ENCODE measurements at regions of chr3 and their contacts with region 1.

Region 1: DNA sequence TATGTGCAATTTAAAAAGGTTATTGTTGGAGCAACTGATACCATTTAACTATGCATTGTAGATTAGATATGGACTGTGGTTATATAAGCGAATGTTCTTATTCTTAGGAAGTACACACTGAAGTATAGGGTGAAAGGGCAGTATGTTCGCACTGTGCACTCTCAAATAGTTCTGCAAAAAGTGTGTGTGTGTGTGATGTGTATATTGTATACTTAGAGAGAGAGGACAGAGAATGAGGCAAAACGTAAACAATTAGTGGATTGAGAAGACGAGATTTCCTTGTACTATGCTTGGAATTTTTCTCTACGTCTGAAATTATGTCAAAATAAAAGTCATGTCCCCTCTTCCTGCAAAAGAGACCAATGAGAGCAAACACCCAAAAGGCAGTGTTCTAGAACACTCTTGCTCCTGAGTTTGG is 30.4 kb downstream of the LSM3 start:
- DNase-seq: no peak
- H3K4me3 ChIP-seq: no peak overlapping the region
- H3K27ac ChIP-seq: no peak overlapping the region
- H3K4me1 ChIP-seq: peaks cover 21% of the 10 kb centered on the region
- H3K27me3 ChIP-seq: no peaks in the 10 kb centered on the region
- CTCF ChIP-seq: no peak
- EP300 ChIP-seq: no peak
- POLR2A ChIP-seq: no peak

Region 2: DNA sequence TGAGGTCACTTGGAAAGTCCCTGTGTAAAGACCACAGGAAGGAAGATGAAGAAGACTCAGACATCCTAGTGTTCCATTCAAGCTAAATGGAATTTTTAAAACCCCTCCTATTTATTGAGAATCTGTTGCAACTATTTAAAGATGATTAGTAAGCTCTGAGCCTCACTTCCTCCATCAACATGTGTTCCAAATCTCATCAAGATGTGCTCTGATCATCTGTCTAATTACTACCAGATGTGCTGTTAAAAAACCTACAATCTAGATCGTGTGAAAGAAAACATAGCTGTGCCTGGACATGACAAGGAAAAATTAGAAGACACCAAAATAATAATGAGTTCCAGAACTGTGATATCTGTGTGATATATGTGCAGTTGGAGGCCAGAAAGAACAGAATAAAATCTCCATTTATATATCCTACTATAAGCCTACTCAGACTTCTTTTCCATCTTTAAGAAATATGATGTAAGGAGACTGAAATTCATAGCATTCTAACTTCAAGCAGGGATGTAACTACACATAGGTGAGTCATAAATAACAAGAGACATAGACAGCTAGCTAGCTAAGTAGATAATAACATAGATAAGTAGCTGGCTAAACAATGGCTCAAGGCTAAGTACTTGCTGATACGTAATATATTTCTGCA is 38.3 kb before region 1 on chr3:
- intact Hi-C with region 1: loop called in 1 of 4 experiments (anchors 1 kb)
- DNase-seq: no peak
- H3K4me3 ChIP-seq: no peak overlapping the region
- H3K27ac ChIP-seq: no peak overlapping the region
- H3K4me1 ChIP-seq: peaks cover under 1% of the 10 kb centered on the region
- H3K27me3 ChIP-seq: no peaks in the 10 kb centered on the region
- CTCF ChIP-seq: no peak
- EP300 ChIP-seq: no peak
- POLR2A ChIP-seq: no peak

Region 3: DNA sequence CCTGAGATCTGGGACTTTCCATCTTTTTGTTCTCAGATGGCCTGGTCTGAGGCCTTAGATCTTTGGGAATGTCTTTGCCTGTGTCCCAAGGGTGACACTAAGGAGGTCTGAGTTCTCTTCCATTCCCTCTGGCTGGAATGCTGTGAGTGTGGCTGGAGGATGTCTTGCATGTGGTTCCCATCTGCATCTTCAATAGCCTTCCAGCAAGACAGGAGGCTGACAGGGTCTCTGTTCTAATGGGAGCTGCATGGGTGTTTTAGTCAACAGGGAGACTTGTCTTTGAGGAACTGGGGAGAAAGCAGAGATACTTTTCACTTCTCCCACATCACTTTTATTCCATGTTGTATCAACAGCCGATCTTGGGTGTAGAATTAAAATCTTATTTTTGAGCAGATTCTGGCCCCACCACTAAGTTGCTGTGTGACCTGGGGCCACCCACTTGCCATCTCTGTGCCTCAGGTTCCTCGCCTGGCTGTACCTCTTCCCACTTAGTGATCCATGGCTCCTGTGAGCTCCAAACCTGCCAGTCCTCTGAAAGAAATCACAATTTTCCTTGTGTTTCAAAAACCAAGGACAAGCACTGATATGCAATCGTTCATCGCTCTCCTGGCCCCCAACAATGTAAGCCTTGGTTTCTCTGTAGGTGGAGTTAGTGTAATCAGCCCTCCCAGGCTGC is 44.9 kb after region 1 on chr3:
- intact Hi-C with region 1: loop called in 3 of 4 experiments (anchors 2 to 10 kb)
- DNase-seq: peak in 1 of 5 donors; percentile 1
- H3K4me3 ChIP-seq: no peak overlapping the region
- H3K27ac ChIP-seq: no peak overlapping the region
- H3K4me1 ChIP-seq: peaks cover 7% of the 10 kb centered on the region
- H3K27me3 ChIP-seq: no peaks in the 10 kb centered on the region
- CTCF ChIP-seq: no peak
- EP300 ChIP-seq: no peak
- POLR2A ChIP-seq: no peak

Measured in ovary (tissue), 10 donors.